Dorsolateral prefrontal cortex (tissue), 120 donors: ENCODE measurements at regions of chr6 and their contacts with region 1.

Region 1: DNA sequence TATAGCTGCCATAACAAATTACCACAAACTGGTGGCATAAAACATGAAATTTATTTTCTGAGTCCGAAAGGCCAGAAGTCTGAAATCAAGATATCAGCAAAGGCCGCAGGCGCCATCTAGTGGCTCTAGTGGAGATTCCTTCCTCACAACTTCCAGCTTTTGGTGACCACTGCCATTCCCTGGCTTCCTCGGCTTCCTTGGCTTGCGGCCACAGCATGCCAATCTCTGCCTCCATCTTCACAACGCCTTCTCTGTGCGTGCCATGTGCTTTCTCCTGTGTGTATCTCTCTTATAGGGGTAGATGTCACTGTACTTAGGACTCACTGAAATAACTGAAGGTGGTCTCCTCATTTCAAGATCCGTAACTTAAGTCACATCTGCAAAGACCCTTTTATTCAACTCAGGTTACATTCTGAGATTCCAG is 5.4 kb upstream of the PLAGL1 start:
- DNase-seq: peak; percentile 50 to 78 (median 67)
- H3K4me3 ChIP-seq: no peak overlapping the region
- H3K27ac ChIP-seq: no peak overlapping the region
- H3K27me3 ChIP-seq: peaks cover 0 to 3% (median 0%) of the 10 kb centered on the region in 45 donors
- CTCF ChIP-seq: peak; percentile 64 to 99 (median 85)

Region 2: DNA sequence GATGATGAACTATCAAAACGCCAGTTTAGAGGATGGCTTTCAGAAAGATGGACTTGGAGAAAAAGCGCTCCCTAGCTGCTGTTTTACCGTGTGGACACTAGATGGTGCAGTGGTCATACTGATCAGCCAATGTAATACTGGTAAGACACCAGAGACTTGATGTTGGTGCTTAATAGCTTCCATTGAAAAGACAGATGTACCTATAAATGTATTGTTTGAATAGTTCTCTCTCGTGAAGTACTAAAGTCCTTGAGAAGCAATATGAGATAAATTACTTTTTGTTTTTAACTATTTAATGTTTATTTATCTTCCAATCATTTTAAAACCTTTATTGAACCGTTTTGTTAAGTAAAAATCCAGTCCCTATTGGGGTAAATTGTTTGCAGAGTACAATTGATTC is 438.1 kb before region 1 on chr6:
- intact Hi-C with region 1: loop called (anchors 2 to 5 kb)
- DNase-seq: peak in 4 of 10 donors; percentile 20 to 42 (median 29)
- H3K4me3 ChIP-seq: peak overlapping the region in 1 of 59 donors; percentile 24
- H3K27ac ChIP-seq: no peak overlapping the region
- H3K27me3 ChIP-seq: no peaks in the 10 kb centered on the region
- CTCF ChIP-seq: peak; percentile 72 to 98 (median 88)

Region 3: DNA sequence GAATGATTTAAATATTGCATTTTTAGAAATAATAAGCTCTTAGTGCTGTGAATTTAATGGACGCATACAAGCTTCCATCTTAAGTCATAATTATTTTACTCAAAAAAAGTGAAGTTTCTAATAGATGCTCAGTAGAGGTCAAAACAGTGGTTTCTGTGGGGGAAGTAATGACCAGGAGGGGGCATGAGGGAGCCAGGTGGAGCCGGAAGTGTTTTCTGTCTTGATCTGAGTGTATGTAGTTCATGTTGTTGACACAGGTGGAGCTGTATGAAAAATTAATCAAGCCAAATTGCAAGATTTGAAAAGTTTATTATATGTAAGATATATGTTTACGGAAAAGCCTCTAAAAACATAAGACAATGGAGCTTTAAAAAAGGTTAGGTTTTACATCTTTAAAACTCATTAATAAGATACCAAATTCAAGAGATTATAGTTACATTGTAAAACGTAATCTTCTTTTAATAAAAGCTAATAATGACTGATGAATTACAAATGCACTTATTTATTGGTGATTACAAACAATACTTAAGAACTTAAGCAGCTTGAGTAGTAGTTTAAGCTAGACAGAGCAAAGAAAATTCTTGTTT is 73.4 kb before region 1 on chr6:
- intact Hi-C with region 1: loop called in 1 of 2 experiments (anchors 5 kb)
- DNase-seq: no peak
- H3K4me3 ChIP-seq: no peak overlapping the region
- H3K27ac ChIP-seq: no peak overlapping the region
- H3K27me3 ChIP-seq: no peaks in the 10 kb centered on the region
- CTCF ChIP-seq: peak in 49 of 56 donors; percentile 11 to 61 (median 35)